ENCODE measurements at regions of chr5 and their contacts with region 1.

Region 1: DNA sequence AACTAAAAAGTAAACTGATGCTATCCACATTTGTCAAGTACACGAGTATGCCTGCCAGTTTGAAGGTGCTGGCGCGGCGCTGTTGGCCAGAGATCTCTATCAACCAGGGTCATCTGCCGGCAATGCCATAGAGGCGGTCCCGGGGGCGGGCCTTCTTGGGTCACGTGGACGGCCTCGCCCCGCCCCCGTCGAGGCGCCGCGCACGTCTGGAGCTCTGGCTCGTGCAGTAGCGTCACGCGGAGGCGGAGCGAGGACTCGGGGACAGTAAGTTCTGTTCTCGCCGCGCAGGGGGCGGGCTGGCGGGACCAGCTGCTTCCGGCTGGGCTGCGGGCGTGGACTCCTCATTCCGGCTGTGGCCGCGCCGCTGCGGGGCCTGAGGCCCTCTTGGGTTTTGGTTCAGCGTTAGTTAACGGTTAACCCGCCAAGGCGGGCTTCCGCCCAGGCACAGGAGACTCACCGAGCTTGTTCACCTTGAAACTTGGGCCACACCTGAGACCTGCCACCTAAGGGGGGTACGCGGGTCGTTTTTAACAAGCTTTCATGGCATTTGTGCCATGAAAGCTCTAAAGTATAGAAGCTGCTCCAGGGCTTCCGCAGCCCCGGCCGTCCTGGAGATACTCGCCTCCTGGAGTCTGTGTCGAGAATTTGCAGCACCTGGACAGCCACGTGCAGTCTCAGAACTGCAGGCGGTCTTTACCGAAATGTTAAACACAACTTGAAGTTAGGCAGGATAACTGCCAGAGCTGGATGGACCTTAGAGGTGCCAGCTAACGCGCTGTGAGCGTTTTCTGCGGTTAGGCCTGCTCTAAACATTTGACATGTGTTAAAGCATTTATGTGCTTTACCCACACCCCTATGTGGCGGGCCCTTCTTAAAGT is at the start of gene RFESD:
- DNase-seq: peak; percentile 98
- ATAC-seq: peak; percentile 96
- H3K4me3 Mint-ChIP-seq: peak within 1 kb of the TSS; percentile 82
- H3K27ac Mint-ChIP-seq: peak within 1 kb of the TSS; percentile 86
- H3K4me1 Mint-ChIP-seq: peaks cover 36% of the 10 kb centered on the region
- H3K27me3 Mint-ChIP-seq: no peaks in the 10 kb centered on the region
- total RNA-seq, gene RFESD: 4.2 to 5.0 TPM

Region 2: DNA sequence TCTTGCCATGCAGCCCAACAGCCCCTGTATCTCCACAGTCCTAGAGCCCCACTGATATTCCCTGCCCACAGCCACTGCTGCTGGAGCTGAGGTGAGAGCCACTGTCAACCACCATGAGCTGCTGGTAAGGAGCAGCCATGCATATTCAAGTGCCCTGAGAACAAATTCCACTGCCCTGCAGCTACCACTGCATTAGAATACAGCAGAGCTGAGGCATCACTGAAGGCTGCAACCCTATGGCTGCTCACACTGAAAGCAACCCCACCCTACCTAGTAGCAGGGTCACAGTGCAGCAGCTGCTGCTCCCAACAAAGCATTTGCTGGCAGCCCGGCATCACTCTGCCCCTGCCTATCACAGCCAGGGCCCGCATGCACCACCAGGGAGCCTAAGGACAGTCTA is 160.6 kb before region 1 on chr5:
- POLR2A ChIA-PET with region 1: no interaction called
- DNase-seq: no peak
- ATAC-seq: no peak
- H3K4me3 Mint-ChIP-seq: no peak overlapping the region
- H3K27ac Mint-ChIP-seq: no peak overlapping the region
- H3K4me1 Mint-ChIP-seq: peaks cover 4% of the 10 kb centered on the region
- H3K27me3 Mint-ChIP-seq: no peaks in the 10 kb centered on the region

Region 3: DNA sequence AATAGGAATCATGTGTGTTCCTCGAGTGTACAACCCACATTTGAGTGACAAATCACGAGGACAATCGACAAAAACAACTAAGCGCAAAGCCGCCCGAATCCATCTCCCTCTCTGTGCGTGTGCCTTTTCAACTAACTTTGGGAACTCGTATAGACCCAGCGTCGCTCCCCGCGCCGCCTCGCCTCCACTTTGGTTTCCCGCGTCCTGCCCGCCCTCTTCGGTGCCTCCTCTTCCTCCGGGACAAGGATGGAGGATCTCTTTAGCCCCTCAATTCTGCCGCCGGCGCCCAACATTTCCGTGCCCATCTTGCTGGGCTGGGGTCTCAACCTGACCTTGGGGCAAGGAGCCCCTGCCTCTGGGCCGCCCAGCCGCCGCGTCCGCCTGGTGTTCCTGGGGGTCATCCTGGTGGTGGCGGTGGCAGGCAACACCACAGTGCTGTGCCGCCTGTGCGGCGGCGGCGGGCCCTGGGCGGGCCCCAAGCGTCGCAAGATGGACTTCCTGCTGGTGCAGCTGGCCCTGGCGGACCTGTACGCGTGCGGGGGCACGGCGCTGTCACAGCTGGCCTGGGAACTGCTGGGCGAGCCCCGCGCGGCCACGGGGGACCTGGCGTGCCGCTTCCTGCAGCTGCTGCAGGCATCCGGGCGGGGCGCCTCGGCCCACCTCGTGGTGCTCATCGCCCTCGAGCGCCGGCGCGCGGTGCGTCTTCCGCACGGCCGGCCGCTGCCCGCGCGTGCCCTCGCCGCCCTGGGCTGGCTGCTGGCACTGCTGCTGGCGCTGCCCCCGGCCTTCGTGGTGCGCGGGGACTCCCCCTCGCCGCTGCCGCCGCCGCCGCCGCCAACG is 26.5 kb before region 1 on chr5 and contains the start of gene GPR150:
- POLR2A ChIA-PET with region 1: interaction called, 17 read pairs
- DNase-seq: peak; percentile 81
- ATAC-seq: peak; percentile 68
- H3K4me3 Mint-ChIP-seq: peak within 1 kb of the TSS; percentile 89
- H3K27ac Mint-ChIP-seq: peak within 1 kb of the TSS; percentile 74
- H3K4me1 Mint-ChIP-seq: peaks cover 35% of the 10 kb centered on the region
- H3K27me3 Mint-ChIP-seq: peaks cover 2% of the 10 kb centered on the region
- total RNA-seq, gene GPR150: 1.0 to 1.2 TPM

Region 4: DNA sequence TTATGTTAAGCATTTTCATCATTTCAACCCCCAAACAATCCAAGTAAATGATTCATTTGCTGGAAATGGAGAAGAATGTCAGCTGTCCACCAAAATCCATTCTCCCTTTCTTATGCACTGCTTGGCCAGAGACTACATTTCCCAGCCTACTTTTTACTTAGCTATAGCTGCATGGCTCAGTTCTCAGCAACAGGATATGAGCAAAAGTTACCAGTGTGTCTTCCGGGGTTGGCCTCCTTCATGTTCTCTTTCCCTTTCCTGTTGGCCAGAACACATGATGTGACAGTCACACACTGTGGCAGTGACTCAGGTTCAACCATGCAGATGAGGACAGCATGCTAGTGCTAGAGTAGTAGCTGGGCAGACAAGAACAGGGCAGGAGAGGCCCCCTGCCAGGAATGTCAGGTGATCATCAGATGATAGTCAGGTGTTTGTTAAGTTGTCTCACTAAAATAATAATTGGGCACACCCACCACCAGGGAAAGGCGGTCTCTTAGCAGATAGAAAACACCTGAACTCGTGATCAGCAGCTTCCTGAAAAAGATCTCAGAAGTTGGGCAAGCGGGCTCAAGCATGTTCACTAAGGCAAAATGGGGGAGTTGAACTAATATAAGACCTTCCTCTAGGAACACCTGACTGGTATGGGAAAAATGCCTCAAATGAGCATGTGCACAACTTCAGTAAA is 14.7 kb before region 1 on chr5:
- POLR2A ChIA-PET with region 1: interaction called, 14 read pairs
- DNase-seq: peak; percentile 57
- ATAC-seq: peak; percentile 100
- H3K4me3 Mint-ChIP-seq: peak overlapping the region; percentile 44
- H3K27ac Mint-ChIP-seq: peak overlapping the region; percentile 94
- H3K4me1 Mint-ChIP-seq: peaks cover 10% of the 10 kb centered on the region
- H3K27me3 Mint-ChIP-seq: peaks cover 8% of the 10 kb centered on the region

Region 5: GRCh38 chr5:95697781-95698681 is 51.2 kb after region 1 on chr5:
- POLR2A ChIA-PET with region 1: no interaction called
- DNase-seq: no peak
- ATAC-seq: no peak
- H3K4me3 Mint-ChIP-seq: no peak overlapping the region
- H3K27ac Mint-ChIP-seq: no peak overlapping the region
- H3K4me1 Mint-ChIP-seq: no peaks in the 10 kb centered on the region
- H3K27me3 Mint-ChIP-seq: peaks cover 28% of the 10 kb centered on the region

Measured in activated naive CD8-positive, alpha-beta T cell treated with anti-CD3 and anti-CD28 coated beads, Interleukin-2, amount 10 ng/mL, durations not matched to agents 7 days and 5 days (primary cell).